GM12878 (cell line): ENCODE measurements at regions of chrX and their contacts with region 1.

Region 1: GRCh38 chrX:124478046-124478445 is 131.7 kb downstream of the SH2D1A start:
- DNase-seq: no peak
- ATAC-seq: peak; percentile 41; the same call in 2 of the 3 replicates
- H3K4me3 ChIP-seq: no peak overlapping the region
- H3K27ac ChIP-seq: no peak overlapping the region
- H3K4me1 ChIP-seq: no peaks in the 10 kb centered on the region
- H3K27me3 ChIP-seq: no peaks in the 10 kb centered on the region
- CTCF ChIP-seq: no peak
- EP300 ChIP-seq: no peak
- POLR2A ChIP-seq: no peak
- RAD21 ChIP-seq: no peak

Region 2: DNA sequence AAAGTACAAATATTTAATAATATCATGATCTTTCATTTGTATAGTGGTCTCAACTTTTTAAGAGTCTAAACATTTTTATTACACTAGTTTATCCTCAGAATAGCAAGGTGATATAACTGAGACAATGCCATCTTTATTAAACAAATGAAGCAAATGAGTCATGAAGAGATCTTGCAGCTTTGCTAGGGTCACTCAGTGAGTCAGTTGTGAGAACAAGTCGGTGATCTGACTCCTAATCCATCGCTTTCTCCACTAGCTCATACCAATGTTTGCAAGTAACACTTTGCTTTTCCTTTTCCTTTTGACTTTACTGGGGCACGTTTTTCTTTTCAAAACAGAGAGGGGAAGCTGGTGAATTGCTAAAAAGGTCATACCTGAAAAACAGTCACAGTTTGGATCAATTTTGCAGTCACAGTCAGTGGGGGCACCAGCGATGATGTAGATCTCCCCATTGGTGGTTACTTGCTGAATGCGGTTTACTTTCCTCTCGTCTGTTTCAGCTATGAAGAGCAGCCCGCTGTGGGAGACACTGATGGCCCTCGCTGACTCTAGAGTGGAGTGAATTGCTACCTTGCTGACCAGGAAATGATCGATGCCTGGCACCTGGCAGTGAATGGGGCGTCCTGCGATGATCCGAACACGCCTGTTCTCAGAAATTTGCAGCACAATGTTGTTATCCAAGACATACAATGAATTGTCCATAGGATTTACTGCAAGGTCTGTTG is 56.0 kb before region 1 on chrX:
- CTCF ChIA-PET with region 1: no interaction called
- POLR2A ChIA-PET with region 1: no interaction called
- RAD21 ChIA-PET with region 1: no interaction called
- SMC1A ChIA-PET with region 1: no interaction called
- in situ Hi-C with region 1: no loop called
- intact Hi-C with region 1: no loop called
- DNase-seq: no peak
- ATAC-seq: no peak
- H3K4me3 ChIP-seq: no peak overlapping the region
- H3K27ac ChIP-seq: no peak overlapping the region
- H3K4me1 ChIP-seq: no peaks in the 10 kb centered on the region
- H3K27me3 ChIP-seq: no peaks in the 10 kb centered on the region
- CTCF ChIP-seq: no peak
- EP300 ChIP-seq: no peak
- POLR2A ChIP-seq: no peak
- RAD21 ChIP-seq: no peak

Region 3: DNA sequence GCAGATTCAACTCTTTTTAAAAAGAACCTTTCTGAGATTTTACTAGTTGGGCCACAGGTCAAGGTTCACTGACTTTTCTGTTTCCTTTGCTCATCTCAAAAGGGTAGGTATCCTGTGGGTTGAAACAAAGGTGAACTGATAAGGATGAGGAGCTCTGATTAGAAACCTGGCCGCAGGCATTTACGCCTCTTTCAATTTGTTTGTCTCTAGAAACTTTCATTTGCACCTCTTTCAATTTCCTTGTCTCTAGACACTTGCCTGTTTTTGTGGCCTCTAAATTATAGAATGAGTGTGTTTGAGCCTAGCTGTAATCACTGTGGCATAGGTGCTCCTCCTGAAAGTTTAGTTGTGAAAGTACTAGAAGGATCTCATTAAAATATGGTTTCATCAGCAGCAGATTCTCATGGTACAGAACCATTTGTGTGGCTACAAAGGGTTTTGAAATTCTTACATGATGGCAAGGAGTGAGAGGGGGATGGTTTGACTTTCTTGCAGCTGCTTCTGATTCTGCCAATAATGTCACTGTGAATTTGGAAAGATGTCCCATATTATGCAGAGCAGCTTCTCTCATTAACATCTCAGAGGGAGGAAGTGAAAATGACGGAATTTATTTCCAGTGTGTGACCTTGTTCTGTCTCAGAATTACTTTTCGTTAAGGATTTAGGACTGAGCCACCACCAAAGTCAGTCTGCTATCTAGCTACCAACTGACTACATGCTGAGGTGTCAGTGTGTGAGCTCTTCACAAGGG is 10.5 kb after region 1 on chrX:
- CTCF ChIA-PET with region 1: interaction called, 4 read pairs
- POLR2A ChIA-PET with region 1: interaction called, 5 read pairs
- RAD21 ChIA-PET with region 1: interaction called, 9 read pairs
- SMC1A ChIA-PET with region 1: interaction called, 30 read pairs
- in situ Hi-C with region 1: no loop called
- intact Hi-C with region 1: no loop called
- DNase-seq: peak; percentile 32
- ATAC-seq: peak; percentile 93
- H3K4me3 ChIP-seq: no peak overlapping the region
- H3K27ac ChIP-seq: no peak overlapping the region
- H3K4me1 ChIP-seq: no peaks in the 10 kb centered on the region
- H3K27me3 ChIP-seq: no peaks in the 10 kb centered on the region
- CTCF ChIP-seq: no peak
- EP300 ChIP-seq: no peak
- POLR2A ChIP-seq: no peak
- RAD21 ChIP-seq: no peak

Region 4: DNA sequence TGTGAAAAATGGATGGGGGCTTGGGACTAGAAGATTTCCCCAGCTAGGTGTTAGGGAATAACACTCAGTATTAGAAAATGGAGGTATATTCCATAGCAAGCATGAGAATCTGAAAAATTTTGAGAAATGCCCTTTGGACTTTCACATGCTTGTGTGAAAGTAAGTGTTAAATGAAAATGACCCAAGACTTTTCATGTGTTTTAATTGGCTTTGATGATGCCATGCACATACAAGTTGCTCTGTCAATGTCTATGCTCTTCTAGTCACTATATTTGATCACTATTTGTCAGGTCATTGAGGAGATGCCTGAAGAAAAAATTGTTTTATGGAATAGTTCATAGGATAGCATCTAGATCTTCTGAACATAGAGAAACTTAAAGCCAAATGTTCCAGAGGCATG is 15.9 kb after region 1 on chrX:
- CTCF ChIA-PET with region 1: interaction called, 4 read pairs
- POLR2A ChIA-PET with region 1: interaction called, 5 read pairs
- RAD21 ChIA-PET with region 1: interaction called, 9 read pairs
- SMC1A ChIA-PET with region 1: interaction called, 30 read pairs
- in situ Hi-C with region 1: no loop called
- intact Hi-C with region 1: no loop called
- DNase-seq: no peak
- ATAC-seq: peak; percentile 52; the same call in 2 of the 3 replicates
- H3K4me3 ChIP-seq: no peak overlapping the region
- H3K27ac ChIP-seq: no peak overlapping the region
- H3K4me1 ChIP-seq: no peaks in the 10 kb centered on the region
- H3K27me3 ChIP-seq: no peaks in the 10 kb centered on the region
- CTCF ChIP-seq: no peak
- EP300 ChIP-seq: no peak
- POLR2A ChIP-seq: no peak
- RAD21 ChIP-seq: no peak